K562 (cell line): ENCODE measurements at regions of chr13 and their contacts with region 1.

Region 1: GRCh38 chr13:108342369-108343289 is 73.1 kb downstream of the TNFSF13B start:
- DNase-seq: peak in 2 of 4 experiments; percentile 7 to 43
- ATAC-seq: 0 out of 3 replicates have a peak, but pooled peaks have one; percentile 42
- H3K4me3 ChIP-seq: no peak overlapping the region
- H3K27ac ChIP-seq: no peak overlapping the region
- H3K4me1 ChIP-seq: no peaks in the 10 kb centered on the region; a peak in 1 of 5 replicates
- H3K27me3 ChIP-seq: no peaks in the 10 kb centered on the region
- CTCF ChIP-seq: peak; percentile 27 to 48 (median 28); a peak in 3 of 6 replicates
- EP300 ChIP-seq: no peak
- POLR2A ChIP-seq: no peak
- RAD21 ChIP-seq: peak; percentile 49 to 51; a peak in 3 of 4 replicates

Region 2: GRCh38 chr13:108070925-108071324 is 271.7 kb before region 1 on chr13:
- CTCF ChIA-PET with region 1: no interaction called
- POLR2A ChIA-PET with region 1: no interaction called
- in situ Hi-C with region 1: no loop called
- intact Hi-C with region 1: no loop called
- DNase-seq: no peak
- ATAC-seq: no peak
- H3K4me3 ChIP-seq: no peak overlapping the region
- H3K27ac ChIP-seq: no peak overlapping the region
- H3K4me1 ChIP-seq: no peaks in the 10 kb centered on the region
- H3K27me3 ChIP-seq: no peaks in the 10 kb centered on the region
- CTCF ChIP-seq: no peak
- EP300 ChIP-seq: no peak
- POLR2A ChIP-seq: no peak
- RAD21 ChIP-seq: no peak

Region 3: DNA sequence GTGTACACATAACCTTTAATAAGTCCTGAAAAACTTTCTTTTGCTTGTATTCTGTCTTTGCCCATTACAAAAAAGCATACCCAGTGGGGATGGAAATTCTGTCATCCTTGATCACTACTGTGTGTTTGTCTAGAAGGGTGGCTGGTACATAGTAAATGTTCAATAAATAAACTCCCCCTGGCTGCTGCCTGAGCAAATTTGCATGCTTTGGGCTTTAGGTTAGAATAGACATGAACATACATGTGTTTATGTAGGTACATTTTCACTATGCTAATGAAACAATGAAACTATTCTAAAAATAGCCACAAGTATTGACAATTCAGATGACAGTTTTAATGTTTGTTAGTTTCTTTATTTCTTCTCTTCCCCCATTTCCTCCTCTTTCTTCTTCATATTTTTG is 37.0 kb before region 1 on chr13:
- CTCF ChIA-PET with region 1: no interaction called
- POLR2A ChIA-PET with region 1: no interaction called
- in situ Hi-C with region 1: no loop called
- intact Hi-C with region 1: no loop called
- DNase-seq: no peak
- ATAC-seq: no peak
- H3K4me3 ChIP-seq: no peak overlapping the region
- H3K27ac ChIP-seq: no peak overlapping the region
- H3K4me1 ChIP-seq: no peaks in the 10 kb centered on the region
- H3K27me3 ChIP-seq: no peaks in the 10 kb centered on the region
- CTCF ChIP-seq: no peak
- EP300 ChIP-seq: no peak
- POLR2A ChIP-seq: no peak
- RAD21 ChIP-seq: no peak

Region 4: GRCh38 chr13:108508263-108508662 is 165.6 kb after region 1 on chr13:
- CTCF ChIA-PET with region 1: no interaction called
- POLR2A ChIA-PET with region 1: no interaction called
- in situ Hi-C with region 1: no loop called
- intact Hi-C with region 1: loop called (anchors 5 kb)
- DNase-seq: peak in 1 of 4 experiments; percentile 27
- ATAC-seq: no peak
- H3K4me3 ChIP-seq: no peak overlapping the region
- H3K27ac ChIP-seq: no peak overlapping the region
- H3K4me1 ChIP-seq: no peaks in the 10 kb centered on the region
- H3K27me3 ChIP-seq: no peaks in the 10 kb centered on the region
- CTCF ChIP-seq: peak in 2 of 3 experiments; percentile 22 to 40; a peak in 3 of 6 replicates
- EP300 ChIP-seq: no peak
- POLR2A ChIP-seq: no peak
- RAD21 ChIP-seq: peak; percentile 38 to 42; a peak in 2 of 4 replicates

Region 5: DNA sequence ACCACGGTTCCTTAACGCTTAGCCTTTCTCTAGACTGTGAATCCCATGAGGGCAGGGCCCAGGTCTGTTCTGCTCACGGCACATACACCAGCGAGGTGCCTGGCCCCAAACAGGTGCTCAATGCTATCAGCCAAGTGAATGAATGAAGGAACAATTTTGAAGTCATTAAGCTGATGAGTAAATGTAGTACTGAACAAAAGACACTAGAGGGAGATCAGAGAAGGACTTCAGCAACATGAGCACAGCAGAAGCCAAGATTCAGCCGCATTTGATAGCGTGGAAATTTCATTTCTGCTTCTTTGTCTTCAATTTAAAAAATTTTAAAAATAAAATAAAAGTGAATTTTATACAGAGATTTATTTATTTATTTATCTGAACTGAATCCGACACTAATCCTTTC is 266.7 kb after region 1 on chr13:
- CTCF ChIA-PET with region 1: no interaction called
- POLR2A ChIA-PET with region 1: no interaction called
- in situ Hi-C with region 1: no loop called
- intact Hi-C with region 1: loop called (anchors 1 kb)
- DNase-seq: peak in 1 of 4 experiments; percentile 18
- ATAC-seq: peak; percentile 54; the same call in 2 of the 3 replicates
- H3K4me3 ChIP-seq: no peak overlapping the region
- H3K27ac ChIP-seq: no peak overlapping the region
- H3K4me1 ChIP-seq: no peaks in the 10 kb centered on the region; a peak in 1 of 5 replicates
- H3K27me3 ChIP-seq: no peaks in the 10 kb centered on the region
- CTCF ChIP-seq: peak in 1 of 3 experiments; percentile 20; a peak in 2 of 6 replicates
- EP300 ChIP-seq: no peak
- POLR2A ChIP-seq: no peak
- RAD21 ChIP-seq: peak in 1 of 2 experiments; percentile 45; a peak in 2 of 4 replicates

Region 6: DNA sequence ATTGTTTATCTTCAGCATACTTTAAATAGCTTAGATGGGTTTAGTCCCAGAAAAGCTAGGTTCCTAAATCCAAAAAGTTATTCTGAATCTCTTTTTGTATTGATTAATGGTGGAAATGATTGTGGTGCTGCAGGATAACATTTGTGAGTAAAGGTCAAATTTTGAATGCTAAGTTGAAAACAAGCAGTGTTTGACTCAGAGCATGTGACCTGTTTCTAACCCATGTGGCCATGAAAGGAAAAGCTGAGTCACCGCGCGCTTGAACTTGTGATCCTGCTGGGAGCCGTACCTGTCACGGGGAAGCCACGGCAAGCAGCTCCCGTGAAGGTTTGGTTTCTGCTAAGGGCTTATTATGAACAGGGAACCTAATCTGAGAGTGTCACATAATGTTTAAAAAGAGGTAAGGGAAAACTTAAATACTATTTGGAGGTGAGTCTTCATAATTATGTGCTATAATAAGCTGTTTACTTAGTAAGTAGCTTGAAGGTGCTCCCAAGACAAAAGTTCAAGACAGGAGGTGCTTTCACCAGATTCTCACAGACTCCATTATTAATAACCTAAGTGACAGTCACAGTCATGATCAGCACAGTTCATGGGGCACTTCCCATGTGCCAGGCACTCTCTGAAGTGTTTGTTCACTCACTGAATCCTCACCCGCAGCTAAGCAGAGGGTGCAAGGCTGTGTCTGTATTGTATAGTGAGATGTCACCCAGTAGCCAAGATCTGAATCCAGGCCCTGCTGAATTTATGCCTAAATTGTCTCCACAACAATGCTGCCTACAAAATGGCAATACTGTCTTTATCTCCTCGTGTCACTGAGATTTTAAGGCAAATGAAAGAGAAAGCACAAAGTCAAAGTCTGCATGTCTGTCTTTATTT is 573.2 kb after region 1 on chr13:
- CTCF ChIA-PET with region 1: no interaction called
- POLR2A ChIA-PET with region 1: no interaction called
- in situ Hi-C with region 1: loop called (anchors 25 kb)
- intact Hi-C with region 1: no loop called
- DNase-seq: peak; percentile 51 to 89 (median 56)
- ATAC-seq: peak; percentile 97
- H3K4me3 ChIP-seq: no peak overlapping the region
- H3K27ac ChIP-seq: peak overlapping the region; percentile 84
- H3K4me1 ChIP-seq: peaks cover under 1 to 17% of the 10 kb centered on the region in 2 experiments; a peak in 3 of 5 replicates
- H3K27me3 ChIP-seq: no peaks in the 10 kb centered on the region
- CTCF ChIP-seq: no peak
- EP300 ChIP-seq: peak; percentile 39; the same call in 1 of the 2 replicates
- POLR2A ChIP-seq: no peak
- RAD21 ChIP-seq: no peak